HepG2 (cell line): ENCODE measurements at regions of chr1 and their contacts with region 1.

Region 1: DNA sequence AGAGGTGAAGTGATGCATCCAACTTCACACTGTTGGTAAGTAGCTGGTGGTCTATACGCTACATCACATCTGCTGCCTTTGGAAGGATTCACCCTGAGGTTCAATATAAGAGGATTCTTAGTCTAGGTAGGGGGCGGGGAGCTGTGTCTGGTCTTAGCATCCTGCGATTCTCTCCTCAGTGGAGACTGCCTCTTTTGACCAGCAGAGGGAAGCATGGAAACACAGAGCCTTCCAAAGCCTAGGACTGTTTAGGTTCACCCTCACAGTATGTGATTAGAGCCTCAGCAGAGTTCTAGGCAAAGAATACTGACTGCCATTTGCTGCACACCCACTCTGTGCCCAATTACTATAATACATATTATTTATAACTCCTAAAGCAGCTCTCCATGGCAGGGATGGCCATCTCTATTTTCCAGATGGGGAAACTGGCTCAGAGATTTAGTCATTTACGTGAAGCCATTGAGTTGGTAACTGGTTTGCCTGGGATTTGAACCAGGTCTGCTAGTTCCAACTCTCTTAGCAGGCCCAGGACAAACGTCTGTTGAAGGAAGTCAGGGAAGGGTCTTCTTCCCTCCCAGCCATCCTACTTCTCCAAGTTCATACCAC is 28.9 kb upstream of the EFCAB14 start:
- DNase-seq: peak; percentile 49
- ATAC-seq: peak; percentile 99
- H3K4me3 ChIP-seq: no peak overlapping the region
- H3K27ac ChIP-seq: no peak overlapping the region
- H3K4me1 ChIP-seq: no peaks in the 10 kb centered on the region
- H3K27me3 ChIP-seq: no peaks in the 10 kb centered on the region
- CTCF ChIP-seq: peak; percentile 74
- EP300 ChIP-seq: no peak
- POLR2A ChIP-seq: no peak
- RAD21 ChIP-seq: no peak

Region 2: GRCh38 chr1:46991083-46991923 is 243.5 kb after region 1 on chr1:
- CTCF ChIA-PET with region 1: interaction called, 10 read pairs
- POLR2A ChIA-PET with region 1: no interaction called
- in situ Hi-C with region 1: loop called (anchors 10 kb)
- intact Hi-C with region 1: no loop called
- DNase-seq: peak; percentile 33
- ATAC-seq: peak; percentile 65
- H3K4me3 ChIP-seq: no peak overlapping the region
- H3K27ac ChIP-seq: no peak overlapping the region
- H3K4me1 ChIP-seq: no peaks in the 10 kb centered on the region
- H3K27me3 ChIP-seq: no peaks in the 10 kb centered on the region; a peak in 1 of 5 replicates
- CTCF ChIP-seq: peak; percentile 67
- EP300 ChIP-seq: no peak
- POLR2A ChIP-seq: no peak
- RAD21 ChIP-seq: no peak; the same call in 1 of the 2 replicates